ENCODE measurements at regions of chr5 and their contacts with region 1.

Region 1: DNA sequence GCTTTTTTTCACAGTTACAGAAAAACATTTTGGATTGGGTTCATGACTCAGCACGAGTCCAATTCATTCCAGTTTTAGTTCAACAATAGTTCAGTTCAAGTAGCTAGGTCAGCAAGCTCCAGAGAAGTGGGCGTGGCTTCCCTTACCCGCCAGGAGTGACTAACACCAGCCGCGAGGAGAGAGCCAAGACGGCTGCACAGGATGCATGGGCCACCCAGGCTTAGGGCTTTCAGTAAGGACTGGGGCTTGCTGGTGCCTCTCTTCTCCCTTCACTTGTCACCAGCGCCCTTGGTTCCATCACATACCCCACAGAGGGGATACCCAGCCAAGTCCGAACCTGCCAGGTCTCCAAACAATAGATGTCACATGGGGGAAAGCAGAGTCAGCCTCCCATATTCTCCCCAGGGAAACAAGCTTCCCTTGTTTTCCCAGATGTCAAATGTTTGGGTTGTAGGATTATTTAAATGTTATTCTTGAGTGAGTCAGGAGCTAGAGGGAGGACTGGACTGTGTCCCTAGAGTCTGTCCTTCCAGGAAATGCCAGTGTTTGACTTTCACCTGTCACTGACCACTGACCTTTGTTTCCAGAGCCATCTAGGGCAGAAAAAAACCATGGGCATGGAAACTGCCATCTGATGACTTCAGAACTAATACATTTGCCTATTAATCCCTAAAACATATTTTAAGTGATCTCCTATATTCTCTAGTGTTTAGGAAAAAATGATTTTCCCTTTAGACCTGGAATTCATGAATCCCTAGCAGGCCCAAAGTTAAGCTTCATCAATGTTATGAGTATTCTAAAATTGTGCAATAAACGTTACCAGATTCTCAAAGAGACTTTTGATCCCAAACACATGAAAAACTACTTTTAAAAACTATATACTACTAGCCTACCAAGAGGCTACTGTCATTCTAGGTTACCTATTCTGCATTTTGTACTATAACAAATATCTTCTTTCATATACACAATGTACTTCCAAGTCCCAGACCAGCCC is 51.9 kb downstream of the NIPAL4 start:
- DNase-seq: peak; percentile 92
- ATAC-seq: peak; percentile 94

Region 2: DNA sequence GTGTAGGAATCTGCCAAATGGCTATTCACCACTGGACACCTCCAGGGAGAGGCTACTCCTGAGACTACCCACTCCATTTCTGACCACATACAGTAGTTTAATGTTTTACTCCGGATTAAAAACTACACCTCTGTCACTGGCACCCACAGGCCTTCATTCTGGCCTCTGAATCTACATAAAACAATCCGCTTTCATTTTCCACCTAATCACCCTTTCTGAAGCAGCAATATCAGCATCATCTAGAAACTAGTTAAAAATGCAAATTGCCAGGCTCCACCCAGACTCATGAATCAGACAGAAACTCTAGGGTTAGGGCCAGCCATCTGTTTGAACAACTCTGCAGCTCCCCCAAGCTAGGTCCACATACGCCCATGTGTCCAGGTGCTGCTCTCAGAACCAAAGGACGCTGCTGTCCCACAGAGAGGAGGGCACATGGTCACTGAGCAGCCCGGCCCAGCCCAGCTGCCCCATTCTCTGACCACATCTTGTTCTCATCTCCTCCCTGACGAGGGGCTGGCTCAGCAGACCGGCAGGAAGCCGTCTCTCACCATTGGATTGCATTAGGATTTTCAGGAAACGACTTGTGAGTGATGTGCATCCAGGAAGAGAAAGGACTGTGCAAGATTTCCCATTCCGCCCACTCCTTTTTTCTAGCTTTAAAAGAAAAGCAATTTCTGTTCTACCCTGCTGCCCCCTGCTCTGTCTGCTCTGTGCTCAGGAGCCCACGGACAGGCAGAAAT is 28.9 kb after region 1 on chr5:
- intact Hi-C with region 1: no loop called
- DNase-seq: peak; percentile 70
- ATAC-seq: peak; percentile 78

Region 3: GRCh38 chr5:157563373-157563928 is 51.5 kb after region 1 on chr5:
- intact Hi-C with region 1: loop called (anchors 10 kb)
- DNase-seq: peak; percentile 67
- ATAC-seq: peak; percentile 59

Region 4: DNA sequence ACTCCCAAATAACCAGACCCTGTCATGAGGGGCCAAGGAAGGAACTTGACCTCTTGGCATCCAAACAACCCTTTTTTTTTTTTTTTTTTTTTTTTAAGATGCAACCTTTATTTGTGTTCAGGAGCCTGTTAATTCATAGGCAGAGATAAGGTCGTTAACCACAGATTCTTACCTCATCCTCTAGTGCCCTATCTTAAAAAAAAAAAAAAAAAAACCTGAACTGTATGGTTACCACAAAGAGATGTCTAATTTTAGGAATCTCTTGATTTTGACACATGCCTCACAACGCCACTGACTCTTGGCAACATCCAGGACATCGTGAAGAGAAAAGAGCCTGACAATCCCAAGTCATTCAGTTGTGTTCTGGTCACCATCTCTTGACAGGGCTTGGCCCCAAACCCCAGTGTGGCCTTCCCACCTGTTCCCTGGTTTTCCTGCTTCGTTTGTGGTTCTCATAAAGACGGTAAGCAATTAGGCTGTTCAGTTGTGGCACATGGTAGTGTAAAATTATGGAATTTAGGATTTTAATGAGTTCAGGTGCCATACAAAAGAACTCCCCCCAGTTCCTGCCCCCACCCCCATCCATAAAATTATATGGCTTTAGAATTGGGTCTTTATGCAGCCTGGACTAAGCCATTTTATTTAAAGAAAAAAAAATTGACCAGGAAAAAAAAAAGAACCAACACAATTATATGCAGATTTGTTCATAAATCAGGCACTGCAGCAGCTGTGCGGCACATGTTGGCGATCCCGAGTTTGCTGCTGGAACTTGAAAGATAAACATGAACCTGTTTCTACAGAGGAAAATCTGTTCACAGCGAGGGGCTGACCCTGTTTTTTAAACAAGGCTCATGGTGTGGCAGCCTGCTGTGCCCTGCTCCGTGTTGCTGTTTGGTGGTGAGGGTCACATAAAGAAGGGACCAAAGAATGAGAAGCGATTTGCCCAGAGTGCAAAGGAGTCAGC is 614.8 kb after region 1 on chr5:
- intact Hi-C with region 1: no loop called
- DNase-seq: no peak
- ATAC-seq: no peak

Measured in left ventricle myocardium superior (tissue), 1 donor.